PC-3 (cell line): ENCODE measurements at regions of chrX and their contacts with region 1.

Region 1: GRCh38 chrX:105552395-105552794 is 269.9 kb upstream of the NRK start:
- DNase-seq: peak; percentile 88
- ATAC-seq: peak; percentile 99
- H3K4me3 ChIP-seq: no peak overlapping the region
- H3K27ac ChIP-seq: peak overlapping the region; percentile 45
- H3K4me1 ChIP-seq: peaks cover 12% of the 10 kb centered on the region
- H3K27me3 ChIP-seq: no peaks in the 10 kb centered on the region
- CTCF ChIP-seq: peak; percentile 58

Region 2: DNA sequence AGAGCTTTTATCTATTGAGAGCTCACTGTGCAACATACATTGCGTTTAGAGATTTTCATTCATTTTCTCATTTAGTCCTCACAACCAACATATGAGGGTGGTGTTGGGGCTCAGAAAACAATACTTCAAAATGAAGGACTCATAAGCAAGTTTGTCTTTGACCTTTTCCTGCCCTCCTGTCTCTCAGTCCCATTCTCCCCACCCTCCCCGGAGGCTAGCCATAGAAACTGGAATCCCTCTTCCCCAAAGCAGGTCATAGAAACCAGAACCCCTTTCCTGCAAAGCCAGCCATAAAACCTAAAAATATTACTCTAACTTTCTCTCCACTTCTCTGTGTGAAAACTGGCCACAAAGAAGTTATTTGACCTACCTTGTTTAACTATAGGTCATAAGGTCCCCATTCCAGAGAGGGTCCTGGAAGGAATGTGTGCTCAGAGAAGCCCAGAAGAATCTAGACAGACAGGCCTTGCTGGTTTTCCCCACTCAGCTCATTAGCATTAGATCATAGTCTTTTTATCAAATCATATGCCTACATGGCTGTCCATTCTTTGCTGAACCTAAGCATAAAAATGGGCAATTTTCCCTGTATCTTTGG is 279.2 kb before region 1 on chrX:
- CTCF ChIA-PET with region 1: no interaction called
- POLR2A ChIA-PET with region 1: no interaction called
- intact Hi-C with region 1: no loop called
- DNase-seq: peak; percentile 65
- ATAC-seq: no peak
- H3K4me3 ChIP-seq: no peak overlapping the region
- H3K27ac ChIP-seq: no peak overlapping the region
- H3K4me1 ChIP-seq: peaks cover 14% of the 10 kb centered on the region
- H3K27me3 ChIP-seq: no peaks in the 10 kb centered on the region
- CTCF ChIP-seq: no peak

Region 3: DNA sequence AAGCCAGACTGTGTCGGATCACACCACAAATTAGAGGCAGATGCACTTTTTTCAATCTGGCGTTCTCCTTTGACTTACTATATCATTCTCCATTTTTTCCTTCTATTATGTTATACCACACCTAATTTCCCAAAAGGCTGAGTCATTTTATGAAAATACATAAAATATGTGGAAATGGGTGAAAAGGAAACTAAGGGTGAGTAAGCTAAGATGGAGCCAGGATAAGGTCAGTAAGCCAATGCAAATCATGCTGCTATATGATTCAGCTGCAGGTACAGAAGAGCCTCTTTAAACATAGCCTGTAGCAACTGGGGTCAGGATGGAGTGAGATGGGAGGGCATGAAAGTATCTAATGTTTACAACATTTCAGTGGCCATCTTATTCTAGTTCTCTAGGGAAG is 237.9 kb before region 1 on chrX:
- CTCF ChIA-PET with region 1: interaction called, 3 read pairs
- POLR2A ChIA-PET with region 1: no interaction called
- intact Hi-C with region 1: loop called (anchors 2 kb)
- DNase-seq: peak; percentile 91
- ATAC-seq: peak; percentile 92
- H3K4me3 ChIP-seq: peak overlapping the region; percentile 61
- H3K27ac ChIP-seq: peak overlapping the region; percentile 95
- H3K4me1 ChIP-seq: peaks cover 36% of the 10 kb centered on the region
- H3K27me3 ChIP-seq: no peaks in the 10 kb centered on the region
- CTCF ChIP-seq: no peak

Region 4: GRCh38 chrX:105526431-105526830 is 26.0 kb before region 1 on chrX:
- CTCF ChIA-PET with region 1: no interaction called
- POLR2A ChIA-PET with region 1: no interaction called
- intact Hi-C with region 1: no loop called
- DNase-seq: no peak
- ATAC-seq: no peak
- H3K4me3 ChIP-seq: no peak overlapping the region
- H3K27ac ChIP-seq: no peak overlapping the region
- H3K4me1 ChIP-seq: no peaks in the 10 kb centered on the region
- H3K27me3 ChIP-seq: no peaks in the 10 kb centered on the region
- CTCF ChIP-seq: no peak

Region 5: GRCh38 chrX:105608745-105609144 is 56.4 kb after region 1 on chrX:
- CTCF ChIA-PET with region 1: no interaction called
- POLR2A ChIA-PET with region 1: no interaction called
- intact Hi-C with region 1: loop called (anchors 5 kb)
- DNase-seq: peak; percentile 48
- ATAC-seq: no peak
- H3K4me3 ChIP-seq: no peak overlapping the region
- H3K27ac ChIP-seq: no peak overlapping the region
- H3K4me1 ChIP-seq: peaks cover 23% of the 10 kb centered on the region
- H3K27me3 ChIP-seq: no peaks in the 10 kb centered on the region
- CTCF ChIP-seq: no peak

Region 6: DNA sequence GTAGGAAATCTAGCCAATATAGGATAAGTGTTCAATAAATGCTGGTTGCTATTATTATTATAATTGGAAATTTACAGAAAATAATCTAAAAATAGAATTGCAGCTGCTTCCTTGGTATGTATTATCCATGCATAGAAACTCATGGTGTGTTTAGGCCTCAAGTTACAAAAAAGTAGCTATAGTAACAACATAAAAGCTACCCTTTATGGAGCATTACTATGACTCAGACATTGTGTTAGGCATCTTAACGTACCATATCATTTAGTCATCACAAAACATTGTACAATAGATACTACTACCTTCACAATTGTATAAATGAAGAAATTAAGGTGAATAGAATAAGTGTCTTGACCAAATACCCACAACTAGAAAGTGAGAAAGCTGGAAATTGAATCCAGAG is 143.1 kb after region 1 on chrX:
- CTCF ChIA-PET with region 1: no interaction called
- POLR2A ChIA-PET with region 1: no interaction called
- intact Hi-C with region 1: loop called (anchors 5 kb)
- DNase-seq: peak; percentile 84
- ATAC-seq: peak; percentile 96
- H3K4me3 ChIP-seq: no peak overlapping the region
- H3K27ac ChIP-seq: peak overlapping the region; percentile 75
- H3K4me1 ChIP-seq: peaks cover 27% of the 10 kb centered on the region
- H3K27me3 ChIP-seq: no peaks in the 10 kb centered on the region
- CTCF ChIP-seq: no peak

Region 7: GRCh38 chrX:105869701-105870100 is 317.3 kb after region 1 on chrX:
- CTCF ChIA-PET with region 1: no interaction called
- POLR2A ChIA-PET with region 1: no interaction called
- intact Hi-C with region 1: no loop called
- DNase-seq: peak; percentile 2
- ATAC-seq: no peak; the same call in 1 of the 2 replicates
- H3K4me3 ChIP-seq: no peak overlapping the region
- H3K27ac ChIP-seq: no peak overlapping the region
- H3K4me1 ChIP-seq: no peaks in the 10 kb centered on the region
- H3K27me3 ChIP-seq: no peaks in the 10 kb centered on the region
- CTCF ChIP-seq: no peak